Activated T-helper 2 cell treated with anti-CD3 and anti-CD28 coated beads, Interferon-gamma antibody, Interleukin-2, Interleukin-4, amounts not matched to agents 10 μg/mL and 5 μg/mL and 100 μg/mL, durations not matched to agents 14 hours and 24 hours and 36 hours (primary cell): ENCODE measurements at regions of chr21 and their contacts with region 1.

Region 1: DNA sequence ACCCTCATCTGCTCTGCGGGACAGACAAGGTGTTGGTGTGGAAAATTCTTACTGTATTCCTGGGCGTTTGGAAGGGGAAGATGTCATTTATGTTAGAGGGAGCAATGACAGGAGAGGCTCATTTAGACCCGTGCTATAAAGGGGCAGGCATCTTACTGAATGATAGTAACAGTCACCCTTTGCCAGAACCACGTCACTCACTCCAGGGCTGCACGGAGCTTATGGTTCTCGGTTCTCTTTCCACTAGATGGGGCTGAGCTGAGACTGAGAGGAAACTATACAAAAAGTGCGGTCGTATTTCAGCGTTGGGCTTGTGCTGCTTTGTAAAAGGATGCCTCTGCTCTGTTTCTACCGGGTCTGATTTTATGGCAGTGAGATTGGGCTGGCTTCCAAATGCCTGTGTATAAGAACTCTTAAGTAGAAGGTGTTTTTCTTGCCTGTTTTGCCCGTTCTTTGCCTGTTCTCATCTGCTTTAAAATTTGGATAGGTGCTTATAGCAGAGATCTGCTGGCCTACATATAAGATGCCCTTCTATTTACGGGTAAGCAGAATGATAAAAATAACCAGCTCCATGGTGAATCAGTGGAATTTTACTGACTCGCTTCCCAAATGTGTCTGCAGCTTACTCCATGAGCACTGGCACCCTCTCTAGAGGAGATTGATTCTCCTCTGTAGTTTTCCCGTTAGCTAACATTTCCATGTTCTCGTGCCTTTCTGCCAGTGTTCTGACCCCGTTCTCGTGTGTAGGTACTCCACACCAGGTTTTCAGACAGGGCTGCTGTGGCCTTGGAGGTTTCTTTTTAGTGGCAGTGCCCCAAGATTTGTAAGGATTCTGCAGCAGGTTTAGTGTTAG is 55.9 kb downstream of the MRPS6 start:
- DNase-seq: peak; percentile 71
- H3K4me3 Mint-ChIP-seq: peak overlapping the region; percentile 64
- H3K27ac Mint-ChIP-seq: peak overlapping the region; percentile 94
- H3K4me1 Mint-ChIP-seq: peaks cover 70% of the 10 kb centered on the region
- H3K27me3 Mint-ChIP-seq: no peaks in the 10 kb centered on the region

Region 2: DNA sequence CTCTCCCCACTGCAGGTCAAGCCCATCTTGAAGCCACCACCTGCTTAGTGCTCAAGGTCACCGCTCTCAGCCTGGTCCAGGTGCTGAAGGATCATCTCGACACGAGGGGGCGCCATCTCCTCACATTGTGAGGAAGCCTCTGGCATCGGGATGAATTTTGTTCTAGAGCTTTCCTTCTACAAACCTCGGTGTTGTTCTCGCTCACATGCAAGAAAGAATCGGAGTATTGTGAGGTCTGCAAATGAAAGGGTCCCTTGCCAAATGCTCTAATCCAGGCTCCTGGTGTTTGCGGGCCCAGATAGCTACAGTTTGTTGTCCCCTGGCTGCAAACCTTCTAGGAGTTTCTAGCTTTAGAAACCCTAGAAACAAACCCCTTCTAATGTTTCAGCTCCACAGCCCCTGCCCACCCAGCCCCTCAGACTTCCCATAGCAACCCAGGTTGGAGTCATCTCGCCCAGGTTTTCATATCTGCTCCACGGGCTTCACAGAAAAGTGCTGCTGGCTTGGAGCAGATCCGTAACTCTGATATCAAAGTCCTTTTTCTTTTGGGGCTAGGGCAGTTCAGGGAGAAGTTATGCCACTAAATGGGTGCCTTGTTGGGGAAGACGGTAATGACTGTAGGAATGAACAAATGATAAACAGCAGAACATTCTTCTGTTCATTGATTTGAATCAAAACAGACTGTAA is 205.0 kb before region 1 on chr21:
- intact Hi-C with region 1: loop called (anchors 5 kb)
- DNase-seq: peak; percentile 77
- H3K4me3 Mint-ChIP-seq: no peak overlapping the region
- H3K27ac Mint-ChIP-seq: no peak overlapping the region
- H3K4me1 Mint-ChIP-seq: peaks cover 14% of the 10 kb centered on the region
- H3K27me3 Mint-ChIP-seq: no peaks in the 10 kb centered on the region

Region 3: GRCh38 chr21:34078915-34079314 is 50.4 kb before region 1 on chr21:
- intact Hi-C with region 1: loop called (anchors 2 kb)
- DNase-seq: no peak
- H3K4me3 Mint-ChIP-seq: peak overlapping the region; percentile 64
- H3K27ac Mint-ChIP-seq: peak overlapping the region; percentile 73
- H3K4me1 Mint-ChIP-seq: peaks cover 86% of the 10 kb centered on the region
- H3K27me3 Mint-ChIP-seq: no peaks in the 10 kb centered on the region

Region 4: GRCh38 chr21:34157521-34157920 is 28.3 kb after region 1 on chr21:
- intact Hi-C with region 1: loop called (anchors 1 kb)
- DNase-seq: no peak
- H3K4me3 Mint-ChIP-seq: no peak overlapping the region
- H3K27ac Mint-ChIP-seq: peak overlapping the region; percentile 8
- H3K4me1 Mint-ChIP-seq: peaks cover 37% of the 10 kb centered on the region
- H3K27me3 Mint-ChIP-seq: no peaks in the 10 kb centered on the region

Region 5: GRCh38 chr21:34198231-34199120 is 69.2 kb after region 1 on chr21:
- intact Hi-C with region 1: loop called (anchors 1 kb)
- DNase-seq: peak; percentile 35
- H3K4me3 Mint-ChIP-seq: peak overlapping the region; percentile 26
- H3K27ac Mint-ChIP-seq: peak overlapping the region; percentile 94
- H3K4me1 Mint-ChIP-seq: peaks cover 55% of the 10 kb centered on the region
- H3K27me3 Mint-ChIP-seq: no peaks in the 10 kb centered on the region

Region 6: GRCh38 chr21:34343838-34344381 is 214.6 kb after region 1 on chr21:
- intact Hi-C with region 1: loop called (anchors 5 kb)
- DNase-seq: no peak
- H3K4me3 Mint-ChIP-seq: no peak overlapping the region
- H3K27ac Mint-ChIP-seq: no peak overlapping the region
- H3K4me1 Mint-ChIP-seq: peaks cover 14% of the 10 kb centered on the region
- H3K27me3 Mint-ChIP-seq: peaks cover 4% of the 10 kb centered on the region